Mammary epithelial cell (primary cell): ENCODE measurements at regions of chr7 and their contacts with region 1.

Region 1: DNA sequence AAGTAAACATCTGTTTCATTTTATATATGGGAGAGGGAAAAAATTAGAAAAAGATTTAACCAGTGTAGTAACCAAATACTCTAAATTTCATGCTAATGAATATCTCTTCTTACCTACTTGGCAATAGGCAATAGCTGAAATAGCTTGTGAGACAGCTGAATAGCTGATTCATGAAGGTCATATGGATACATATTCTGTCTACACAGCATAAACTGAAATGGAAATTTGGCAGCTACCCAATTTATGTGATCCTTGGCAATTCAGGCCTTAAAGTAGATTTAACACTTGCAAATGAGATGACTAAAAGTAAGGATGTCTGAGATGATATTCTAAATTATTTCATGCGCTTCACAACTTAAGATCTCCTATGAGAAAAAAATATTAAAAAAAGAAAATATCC is 261.2 kb upstream of the SEMA3A start:
- DNase-seq: peak; percentile 1
- H3K4me3 ChIP-seq: no peak overlapping the region
- H3K27ac ChIP-seq: no peak overlapping the region
- H3K4me1 ChIP-seq: no peaks in the 10 kb centered on the region
- H3K27me3 ChIP-seq: no peaks in the 10 kb centered on the region
- CTCF ChIP-seq: no peak

Region 2: GRCh38 chr7:83824214-83824613 is 631.6 kb before region 1 on chr7:
- CTCF ChIA-PET with region 1: no interaction called
- dilution Hi-C with region 1: no loop called
- in situ Hi-C with region 1: no loop called
- intact Hi-C with region 1: no loop called
- DNase-seq: peak; percentile 57
- H3K4me3 ChIP-seq: no peak overlapping the region
- H3K27ac ChIP-seq: no peak overlapping the region
- H3K4me1 ChIP-seq: peaks cover 5% of the 10 kb centered on the region
- H3K27me3 ChIP-seq: no peaks in the 10 kb centered on the region
- CTCF ChIP-seq: no peak

Region 3: DNA sequence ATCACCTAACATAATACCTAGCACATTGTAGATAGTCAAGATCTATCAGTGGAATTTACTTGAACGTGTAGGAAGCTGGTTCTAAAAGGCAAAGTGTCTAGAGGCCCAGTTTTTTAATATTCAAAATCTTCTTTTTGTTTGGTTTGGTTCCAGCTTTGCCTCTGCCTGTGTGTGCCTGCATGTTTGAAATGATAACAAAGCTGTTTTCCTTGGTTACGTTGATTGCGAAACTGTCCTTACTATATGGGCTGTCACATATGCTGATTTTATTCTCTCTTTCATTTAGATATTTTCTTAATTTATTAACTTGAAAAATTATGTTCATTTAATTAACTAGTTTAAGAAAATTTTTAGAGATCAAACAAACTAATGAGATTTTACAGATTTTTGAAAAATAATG is 498.5 kb before region 1 on chr7:
- CTCF ChIA-PET with region 1: no interaction called
- dilution Hi-C with region 1: no loop called
- in situ Hi-C with region 1: loop called in 1 of 2 experiments (anchors 25 kb)
- intact Hi-C with region 1: no loop called
- DNase-seq: no peak
- H3K4me3 ChIP-seq: no peak overlapping the region
- H3K27ac ChIP-seq: no peak overlapping the region
- H3K4me1 ChIP-seq: no peaks in the 10 kb centered on the region
- H3K27me3 ChIP-seq: no peaks in the 10 kb centered on the region
- CTCF ChIP-seq: no peak

Region 4: GRCh38 chr7:84176716-84177115 is 279.1 kb before region 1 on chr7:
- CTCF ChIA-PET with region 1: no interaction called
- dilution Hi-C with region 1: no loop called
- in situ Hi-C with region 1: no loop called
- intact Hi-C with region 1: no loop called
- DNase-seq: peak; percentile 15
- H3K4me3 ChIP-seq: no peak overlapping the region
- H3K27ac ChIP-seq: no peak overlapping the region
- H3K4me1 ChIP-seq: peaks cover 3% of the 10 kb centered on the region
- H3K27me3 ChIP-seq: no peaks in the 10 kb centered on the region
- CTCF ChIP-seq: no peak

Region 5: GRCh38 chr7:84248267-84248666 is 207.5 kb before region 1 on chr7:
- CTCF ChIA-PET with region 1: no interaction called
- dilution Hi-C with region 1: no loop called
- in situ Hi-C with region 1: no loop called
- intact Hi-C with region 1: loop called (anchors 1 kb)
- DNase-seq: peak; percentile 26
- H3K4me3 ChIP-seq: no peak overlapping the region
- H3K27ac ChIP-seq: no peak overlapping the region
- H3K4me1 ChIP-seq: peaks cover 5% of the 10 kb centered on the region
- H3K27me3 ChIP-seq: no peaks in the 10 kb centered on the region
- CTCF ChIP-seq: no peak